Right cardiac atrium (tissue), 5 donors: ENCODE measurements at regions of chr4 and their contacts with region 1.

Region 1: GRCh38 chr4:47122592-47123291 is 91.4 kb downstream of the GABRB1 start:
- DNase-seq: peak; percentile 15 to 24 (median 23)
- ATAC-seq: peak; percentile 71 to 73
- H3K4me3 ChIP-seq: no peak overlapping the region
- H3K27ac ChIP-seq: no peak overlapping the region
- H3K4me1 ChIP-seq: no peaks in the 10 kb centered on the region
- H3K27me3 ChIP-seq: no peaks in the 10 kb centered on the region

Region 2: DNA sequence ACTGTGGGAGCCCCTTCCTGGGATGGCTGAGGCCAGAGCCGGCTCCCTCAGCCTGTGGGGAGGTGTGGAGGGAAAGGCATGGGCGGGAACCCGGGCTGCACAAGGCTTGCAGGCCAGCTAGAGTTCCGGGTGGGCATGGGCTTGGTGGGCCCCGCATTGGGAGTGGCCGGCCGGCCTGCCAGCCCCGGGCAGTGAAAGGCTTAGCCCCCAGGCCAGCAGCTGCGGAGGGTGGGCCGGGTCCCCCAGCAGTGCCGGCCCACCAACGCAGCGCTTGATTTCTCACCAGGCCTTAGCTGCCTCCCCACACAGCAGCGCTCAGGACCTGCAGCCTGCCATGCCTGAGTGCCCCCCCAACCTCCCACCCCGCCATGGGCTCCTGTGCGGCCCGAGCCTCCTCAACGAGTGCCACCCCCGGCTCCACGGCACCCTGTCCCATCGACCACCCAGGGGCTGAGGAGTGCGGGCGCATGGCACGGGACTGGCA is 291.7 kb before region 1 on chr4:
- intact Hi-C with region 1: no loop called
- DNase-seq: peak in 2 of 3 donors; percentile 36 to 44
- ATAC-seq: no peak
- H3K4me3 ChIP-seq: no peak overlapping the region
- H3K27ac ChIP-seq: no peak overlapping the region
- H3K4me1 ChIP-seq: no peaks in the 10 kb centered on the region
- H3K27me3 ChIP-seq: no peaks in the 10 kb centered on the region

Region 3: DNA sequence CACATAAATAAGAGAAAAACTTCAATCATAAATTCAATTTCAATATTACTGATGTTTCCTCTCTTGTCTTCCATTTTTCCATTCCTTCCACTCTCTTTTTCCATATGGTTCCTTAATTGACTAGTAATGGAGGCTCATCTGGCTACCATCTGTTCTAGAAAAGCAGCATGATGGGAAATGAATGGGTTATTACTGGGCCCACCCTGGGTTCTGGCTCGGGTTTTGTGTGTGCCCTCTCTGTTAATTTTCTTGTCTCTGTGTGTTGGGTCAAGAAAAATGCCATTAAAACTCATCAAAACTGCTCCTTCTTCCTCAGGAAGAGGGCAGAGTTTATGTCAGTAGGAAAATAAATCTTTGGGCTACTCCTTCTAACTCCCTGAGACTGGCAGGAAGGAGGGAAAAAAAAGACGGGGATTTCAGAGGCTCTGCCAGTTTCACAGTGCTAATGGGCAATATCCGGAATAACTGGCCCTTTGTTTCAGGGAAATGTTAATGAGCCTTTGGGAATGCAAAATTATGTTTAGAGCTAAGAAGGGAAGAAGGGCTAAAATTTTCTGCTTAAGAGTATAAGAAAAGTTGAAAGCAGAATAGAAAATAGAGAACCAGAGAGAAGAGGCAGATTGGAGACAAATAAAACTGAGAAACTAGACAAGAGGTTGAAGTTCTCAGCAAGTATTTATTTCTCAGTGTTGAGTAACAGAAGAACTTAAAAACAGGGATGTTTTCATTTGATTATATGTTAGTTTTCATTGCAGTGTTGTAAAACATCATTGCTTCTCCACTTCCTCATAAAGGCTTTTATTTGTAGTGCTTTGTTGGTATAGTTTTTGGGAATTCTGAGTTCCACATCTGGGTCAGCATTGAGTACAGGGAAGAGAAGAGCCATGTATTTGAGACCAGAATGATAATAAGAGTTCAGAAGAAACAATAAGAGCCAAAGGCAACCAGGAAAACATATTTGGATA is 71.7 kb before region 1 on chr4:
- intact Hi-C with region 1: loop called in 1 of 4 experiments (anchors 10 kb)
- DNase-seq: no peak
- ATAC-seq: no peak
- H3K4me3 ChIP-seq: no peak overlapping the region
- H3K27ac ChIP-seq: no peak overlapping the region
- H3K4me1 ChIP-seq: no peaks in the 10 kb centered on the region
- H3K27me3 ChIP-seq: no peaks in the 10 kb centered on the region

Region 4: DNA sequence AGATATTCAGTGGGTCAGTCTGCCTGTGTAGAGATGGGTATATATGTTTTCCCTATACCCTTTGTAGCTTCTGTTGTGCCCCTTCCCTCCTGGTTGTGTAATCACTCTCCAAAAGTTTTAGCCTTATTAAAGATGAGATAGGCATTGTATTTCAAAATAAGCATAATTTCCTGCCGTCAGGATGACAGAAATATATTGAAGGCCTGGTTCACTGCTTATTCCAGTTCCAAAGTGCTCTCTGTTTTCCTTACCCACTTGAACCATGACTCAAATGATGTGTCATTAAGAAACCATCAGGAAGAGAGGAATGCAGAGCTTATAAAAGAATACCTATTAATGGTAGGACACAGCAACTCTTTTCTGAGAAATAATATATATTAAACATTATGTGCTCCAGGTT is 87.1 kb after region 1 on chr4:
- intact Hi-C with region 1: no loop called
- DNase-seq: no peak
- ATAC-seq: no peak
- H3K4me3 ChIP-seq: no peak overlapping the region
- H3K27ac ChIP-seq: no peak overlapping the region
- H3K4me1 ChIP-seq: no peaks in the 10 kb centered on the region
- H3K27me3 ChIP-seq: no peaks in the 10 kb centered on the region